A673 (cell line): ENCODE measurements at regions of chr12 and their contacts with region 1.

Region 1: GRCh38 chr12:81294325-81295190 is 216.7 kb downstream of the ACSS3 start:
- DNase-seq: peak; percentile 92
- H3K4me3 ChIP-seq: peak overlapping the region; percentile 20
- H3K27ac ChIP-seq: peak overlapping the region; percentile 80
- H3K4me1 ChIP-seq: peaks cover 53% of the 10 kb centered on the region
- H3K27me3 ChIP-seq: no peaks in the 10 kb centered on the region
- CTCF ChIP-seq: no peak

Region 2: DNA sequence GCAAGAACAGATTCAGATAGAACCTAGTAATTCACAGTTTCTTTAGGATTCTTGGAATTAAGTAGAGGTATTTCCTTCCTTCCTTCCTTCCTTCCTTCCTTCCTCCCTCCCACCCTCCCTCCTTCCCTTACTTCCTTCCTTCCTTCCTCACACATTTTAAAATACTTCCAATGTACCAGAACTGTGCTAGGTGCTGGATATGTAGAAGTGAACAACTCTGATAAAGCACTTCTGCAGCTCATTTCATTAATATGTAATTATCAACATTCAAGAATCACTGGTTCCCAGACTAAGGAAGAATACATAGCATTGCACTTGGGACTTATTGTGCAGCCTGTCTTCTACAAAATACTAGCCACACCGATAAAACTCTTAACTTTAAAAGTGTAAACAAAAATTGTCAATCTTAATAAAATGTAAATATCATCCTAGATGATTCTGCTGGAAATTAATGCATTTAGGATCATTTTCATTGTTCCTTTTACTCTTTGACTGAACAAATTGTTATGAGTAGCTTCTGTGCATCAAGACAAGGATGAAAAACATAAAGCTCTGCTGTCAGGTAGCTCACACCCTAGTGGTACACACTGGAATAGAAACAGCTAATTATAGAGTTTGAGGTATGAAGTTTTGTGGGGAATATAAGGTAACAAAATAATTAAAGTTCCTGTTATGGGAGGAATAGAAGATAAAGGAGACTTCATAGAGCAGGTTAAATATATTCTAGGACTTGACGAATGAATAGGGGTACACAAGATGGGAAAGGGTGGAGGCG is 687.0 kb before region 1 on chr12:
- CTCF ChIA-PET with region 1: no interaction called
- POLR2A ChIA-PET with region 1: no interaction called
- intact Hi-C with region 1: loop called (anchors 5 kb)
- DNase-seq: peak; percentile 86
- H3K4me3 ChIP-seq: no peak overlapping the region
- H3K27ac ChIP-seq: peak overlapping the region; percentile 89
- H3K4me1 ChIP-seq: peaks cover 56% of the 10 kb centered on the region
- H3K27me3 ChIP-seq: no peaks in the 10 kb centered on the region
- CTCF ChIP-seq: peak; percentile 61

Region 3: GRCh38 chr12:81365284-81365683 is 70.7 kb after region 1 on chr12:
- CTCF ChIA-PET with region 1: no interaction called
- POLR2A ChIA-PET with region 1: no interaction called
- intact Hi-C with region 1: loop called (anchors 1 kb)
- DNase-seq: peak; percentile 37
- H3K4me3 ChIP-seq: no peak overlapping the region
- H3K27ac ChIP-seq: no peak overlapping the region
- H3K4me1 ChIP-seq: no peaks in the 10 kb centered on the region
- H3K27me3 ChIP-seq: no peaks in the 10 kb centered on the region
- CTCF ChIP-seq: no peak